ENCODE measurements at regions of chr12 and their contacts with region 1.

Region 1: GRCh38 chr12:15899282-15899870 is 11.8 kb upstream of the DERA start:
- DNase-seq: peak in 4 of 5 donors; percentile 32 to 47 (median 34)
- H3K4me3 ChIP-seq: no peak overlapping the region
- H3K4me3 Mint-ChIP-seq: no peak overlapping the region
- H3K27ac ChIP-seq: no peak overlapping the region
- H3K27ac Mint-ChIP-seq: peak overlapping the region in 5 of 7 donors; percentile 25 to 85 (median 69)
- H3K4me1 ChIP-seq: no peaks in the 10 kb centered on the region
- H3K4me1 Mint-ChIP-seq: peaks cover 7 to 12% (median 8%) of the 10 kb centered on the region in 4 donors
- H3K27me3 ChIP-seq: no peaks in the 10 kb centered on the region
- H3K27me3 Mint-ChIP-seq: no peaks in the 10 kb centered on the region

Region 2: DNA sequence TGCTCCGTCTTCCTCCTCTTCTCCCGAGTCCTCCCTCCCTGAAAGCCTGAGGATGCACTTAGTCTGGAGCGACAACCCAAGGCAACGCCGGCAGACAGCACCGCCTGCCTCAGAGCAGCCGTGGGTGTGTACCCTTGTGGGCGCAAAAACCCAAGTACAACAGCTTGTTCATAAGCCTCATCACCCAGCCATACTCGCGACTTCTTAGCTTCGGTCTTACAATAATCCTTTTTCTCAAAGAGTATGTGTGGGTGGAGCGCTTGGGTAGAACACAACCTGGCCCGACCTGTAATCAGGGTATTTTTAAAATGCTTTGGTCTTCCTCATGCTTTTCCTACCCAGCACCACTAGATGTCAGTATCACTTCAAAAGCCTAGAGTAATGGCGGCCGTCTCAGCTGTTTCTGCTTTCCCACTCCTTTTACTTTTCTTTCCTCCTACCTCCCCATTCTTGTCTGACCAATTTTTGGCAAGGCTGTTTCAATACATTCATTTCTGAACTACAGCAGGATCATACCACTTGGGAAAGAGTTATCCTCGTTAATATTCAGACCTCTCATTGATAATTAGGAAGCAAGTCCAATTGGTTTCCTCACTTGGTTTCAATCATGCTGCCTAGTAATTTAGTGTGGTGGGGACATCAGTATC is 309.1 kb before region 1 on chr12:
- CTCF ChIA-PET with region 1: interaction called, 8 read pairs
- POLR2A ChIA-PET with region 1: no interaction called
- intact Hi-C with region 1: loop called (anchors 1 kb)
- DNase-seq: peak; percentile 53 to 66 (median 63)
- H3K4me3 ChIP-seq: no peak overlapping the region
- H3K4me3 Mint-ChIP-seq: peak overlapping the region; percentile 68 to 88 (median 80)
- H3K27ac ChIP-seq: no peak overlapping the region
- H3K27ac Mint-ChIP-seq: peak overlapping the region in 6 of 7 donors; percentile 28 to 90 (median 40)
- H3K4me1 ChIP-seq: peaks cover 9% of the 10 kb centered on the region
- H3K4me1 Mint-ChIP-seq: peaks cover 3 to 10% (median 8%) of the 10 kb centered on the region in 4 donors
- H3K27me3 ChIP-seq: no peaks in the 10 kb centered on the region
- H3K27me3 Mint-ChIP-seq: peaks cover 3 to 5% of the 10 kb centered on the region in 2 donors

Region 3: GRCh38 chr12:15772405-15773018 is 126.9 kb before region 1 on chr12:
- CTCF ChIA-PET with region 1: interaction called, 4 read pairs
- POLR2A ChIA-PET with region 1: no interaction called
- intact Hi-C with region 1: loop called (anchors 1 kb)
- DNase-seq: peak in 3 of 5 donors; percentile 9 to 26 (median 14)
- H3K4me3 ChIP-seq: no peak overlapping the region
- H3K4me3 Mint-ChIP-seq: no peak overlapping the region
- H3K27ac ChIP-seq: no peak overlapping the region
- H3K27ac Mint-ChIP-seq: no peak overlapping the region
- H3K4me1 ChIP-seq: no peaks in the 10 kb centered on the region
- H3K4me1 Mint-ChIP-seq: peaks cover 0 to 4% (median 1%) of the 10 kb centered on the region in 4 donors
- H3K27me3 ChIP-seq: no peaks in the 10 kb centered on the region
- H3K27me3 Mint-ChIP-seq: peaks cover 3 to 8% of the 10 kb centered on the region in 2 donors

Region 4: GRCh38 chr12:15789220-15790171 is 109.9 kb before region 1 on chr12 and contains the start of gene EPS8:
- CTCF ChIA-PET with region 1: interaction called, 3 read pairs
- POLR2A ChIA-PET with region 1: no interaction called
- intact Hi-C with region 1: loop called (anchors 5 kb)
- DNase-seq: peak; percentile 85 to 90 (median 90)
- H3K4me3 ChIP-seq: peak within 1 kb of the TSS; percentile 58 to 78
- H3K4me3 Mint-ChIP-seq: peak within 1 kb of the TSS; percentile 90 to 98 (median 96)
- H3K27ac ChIP-seq: peak within 1 kb of the TSS; percentile 38
- H3K27ac Mint-ChIP-seq: peak within 1 kb of the TSS; percentile 86 to 93 (median 90)
- H3K4me1 ChIP-seq: peaks cover 19% of the 10 kb centered on the region
- H3K4me1 Mint-ChIP-seq: peaks cover 12 to 19% (median 15%) of the 10 kb centered on the region in 4 donors
- H3K27me3 ChIP-seq: peaks cover 21% of the 10 kb centered on the region
- H3K27me3 Mint-ChIP-seq: peaks cover 12 to 29% of the 10 kb centered on the region in 2 donors
- total RNA-seq, gene EPS8: 2.6 to 3.8 TPM

Region 5: DNA sequence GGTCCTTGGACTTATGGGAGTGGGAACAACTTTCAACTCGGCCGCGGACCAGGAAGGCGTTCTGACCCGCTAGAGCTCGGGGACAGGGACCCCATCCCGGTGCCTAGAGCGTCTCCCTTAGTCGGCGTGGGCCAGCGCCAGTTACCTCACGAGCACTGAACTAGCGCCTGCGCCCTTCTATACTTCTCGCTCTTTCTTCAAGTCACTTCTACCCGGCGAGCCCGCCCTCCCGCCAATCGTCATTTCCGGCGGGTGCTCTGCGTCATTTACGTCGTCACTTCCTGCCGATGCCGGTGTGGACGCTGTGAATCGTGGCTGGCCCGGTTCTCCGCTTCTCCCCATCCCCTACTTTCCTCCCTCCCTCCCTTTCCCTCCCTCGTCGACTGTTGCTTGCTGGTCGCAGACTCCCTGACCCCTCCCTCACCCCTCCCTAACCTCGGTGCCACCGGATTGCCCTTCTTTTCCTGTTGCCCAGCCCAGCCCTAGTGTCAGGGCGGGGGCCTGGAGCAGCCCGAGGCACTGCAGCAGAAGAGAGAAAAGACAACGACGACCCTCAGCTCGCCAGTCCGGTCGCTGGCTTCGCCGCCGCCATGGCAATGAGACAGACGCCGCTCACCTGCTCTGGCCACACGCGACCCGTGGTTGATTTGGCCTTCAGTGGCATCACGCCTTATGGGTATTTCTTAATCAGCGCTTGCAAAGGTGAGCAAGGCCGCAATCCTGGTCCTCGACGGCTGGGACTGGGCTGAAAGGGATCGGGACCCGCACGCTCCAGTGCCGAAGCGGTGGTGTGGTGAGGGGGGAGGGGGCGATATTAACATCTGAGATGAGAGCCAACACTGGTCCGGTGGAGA is 17.0 kb before region 1 on chr12 and contains the start of gene STRAP:
- CTCF ChIA-PET with region 1: interaction called, 16 read pairs
- POLR2A ChIA-PET with region 1: interaction called, 7 read pairs
- intact Hi-C with region 1: loop called (anchors 1 kb)
- DNase-seq: peak; percentile 96 to 97 (median 97)
- H3K4me3 ChIP-seq: peak within 1 kb of the TSS; percentile 90 to 98
- H3K4me3 Mint-ChIP-seq: peak within 1 kb of the TSS; percentile 96 to 99 (median 98)
- H3K27ac ChIP-seq: peak within 1 kb of the TSS; percentile 95
- H3K27ac Mint-ChIP-seq: peak within 1 kb of the TSS; percentile 99 to 100 (median 100)
- H3K4me1 ChIP-seq: peaks cover 51% of the 10 kb centered on the region
- H3K4me1 Mint-ChIP-seq: peaks cover 38 to 66% (median 53%) of the 10 kb centered on the region in 4 donors
- H3K27me3 ChIP-seq: no peaks in the 10 kb centered on the region
- H3K27me3 Mint-ChIP-seq: no peaks in the 10 kb centered on the region
- total RNA-seq, gene STRAP: 46.1 to 49.1 TPM

Region 6: DNA sequence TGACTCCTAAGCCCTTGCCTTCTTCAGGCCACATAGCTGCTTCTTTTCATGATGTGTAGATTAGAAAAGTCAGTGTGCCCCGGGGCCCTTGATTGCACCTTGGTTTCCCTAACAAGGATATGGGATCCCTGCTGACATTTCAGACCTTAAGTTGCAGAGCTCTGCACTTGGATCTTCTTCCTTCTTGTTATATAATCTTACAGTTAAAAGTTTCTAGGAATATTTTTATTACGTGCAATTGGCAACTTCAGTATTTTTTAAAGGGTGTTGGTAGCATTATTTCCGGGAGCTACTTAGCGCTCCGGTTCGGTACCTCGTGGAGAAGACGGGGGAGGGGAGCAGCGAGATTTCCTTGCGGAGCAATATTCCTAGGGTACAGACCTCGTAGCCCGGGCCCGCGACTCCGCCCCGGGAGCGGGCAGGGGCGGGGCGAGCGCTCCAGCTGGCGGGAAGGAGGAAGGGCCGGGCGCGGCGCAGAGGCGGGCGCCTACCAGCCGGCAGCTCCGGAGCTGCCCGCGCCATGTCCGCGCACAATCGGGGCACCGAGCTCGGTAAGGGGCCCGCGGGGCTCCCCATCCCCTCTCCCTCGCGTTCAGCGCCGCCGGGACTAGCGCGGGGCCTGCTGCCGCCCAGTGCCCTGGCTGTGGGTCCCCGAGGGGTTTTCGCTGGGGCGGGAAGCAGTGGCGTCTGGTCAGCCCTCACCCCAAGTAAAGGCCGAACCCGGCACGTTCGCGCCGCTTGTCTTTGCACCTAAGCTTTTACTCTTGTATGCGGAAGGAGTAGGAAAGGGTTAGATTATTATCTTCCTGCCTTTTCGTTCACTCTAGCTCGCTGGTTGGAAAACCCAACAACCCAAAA is 11.7 kb after region 1 on chr12 and contains the start of gene DERA:
- CTCF ChIA-PET with region 1: interaction called, 42 read pairs
- POLR2A ChIA-PET with region 1: interaction called, 11 read pairs
- intact Hi-C with region 1: loop called (anchors 1 kb)
- DNase-seq: peak; percentile 49 to 65 (median 56)
- H3K4me3 ChIP-seq: peak within 1 kb of the TSS; percentile 70 to 92
- H3K4me3 Mint-ChIP-seq: peak within 1 kb of the TSS; percentile 89 to 96 (median 94)
- H3K27ac ChIP-seq: peak within 1 kb of the TSS; percentile 75
- H3K27ac Mint-ChIP-seq: peak within 1 kb of the TSS; percentile 74 to 96 (median 91)
- H3K4me1 ChIP-seq: peaks cover 7% of the 10 kb centered on the region
- H3K4me1 Mint-ChIP-seq: peaks cover 15 to 20% (median 18%) of the 10 kb centered on the region in 4 donors
- H3K27me3 ChIP-seq: no peaks in the 10 kb centered on the region
- H3K27me3 Mint-ChIP-seq: no peaks in the 10 kb centered on the region
- total RNA-seq, gene DERA: 11.2 to 11.4 TPM

Region 7: DNA sequence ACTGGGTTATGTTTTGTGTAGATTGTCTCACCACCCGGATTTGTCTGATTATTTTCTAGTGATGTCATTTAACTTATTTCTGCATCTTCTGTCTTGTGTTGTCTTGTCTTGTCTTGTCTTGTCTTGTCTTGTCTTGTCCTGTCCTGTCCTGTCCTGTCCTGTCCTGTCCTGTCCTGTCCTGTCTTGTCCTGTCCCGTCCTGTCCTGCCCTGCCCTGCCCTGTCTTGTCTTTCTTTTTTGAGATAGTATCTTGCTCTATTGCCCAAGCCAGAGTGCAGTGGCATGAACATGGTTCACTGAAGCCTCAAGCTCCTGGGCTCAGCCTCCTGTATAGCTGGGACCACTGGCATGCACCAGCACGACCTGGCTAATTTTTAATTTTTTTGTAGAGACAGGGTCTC is 37.4 kb after region 1 on chr12:
- CTCF ChIA-PET with region 1: no interaction called
- POLR2A ChIA-PET with region 1: no interaction called
- intact Hi-C with region 1: no loop called
- DNase-seq: no peak
- H3K4me3 ChIP-seq: no peak overlapping the region
- H3K4me3 Mint-ChIP-seq: peak overlapping the region in 1 of 8 donors; percentile 1
- H3K27ac ChIP-seq: no peak overlapping the region
- H3K27ac Mint-ChIP-seq: no peak overlapping the region
- H3K4me1 ChIP-seq: no peaks in the 10 kb centered on the region
- H3K4me1 Mint-ChIP-seq: peaks cover 3 to 12% (median 7%) of the 10 kb centered on the region in 4 donors
- H3K27me3 ChIP-seq: no peaks in the 10 kb centered on the region
- H3K27me3 Mint-ChIP-seq: no peaks in the 10 kb centered on the region

Region 8: DNA sequence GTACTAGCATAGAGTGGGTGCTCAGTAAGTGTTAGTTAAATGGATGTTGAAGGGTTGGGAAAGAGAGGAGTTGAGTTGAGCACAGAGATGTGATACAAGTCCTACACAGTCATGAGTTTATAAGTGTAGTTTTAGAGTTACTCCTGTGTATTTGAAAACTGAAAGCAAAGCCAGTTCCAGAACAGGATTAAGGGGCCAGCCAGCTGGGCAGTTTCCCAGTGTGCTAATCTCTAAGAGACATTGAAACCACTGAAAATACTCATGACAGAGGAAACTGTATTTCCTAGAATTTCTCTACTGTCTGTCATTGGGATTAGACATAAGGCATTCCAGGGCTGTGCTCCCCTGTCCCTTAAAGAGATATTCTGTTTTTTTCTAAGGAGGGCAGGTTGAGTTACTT is 112.7 kb after region 1 on chr12:
- CTCF ChIA-PET with region 1: no interaction called
- POLR2A ChIA-PET with region 1: no interaction called
- intact Hi-C with region 1: no loop called
- DNase-seq: no peak
- H3K4me3 ChIP-seq: no peak overlapping the region
- H3K4me3 Mint-ChIP-seq: no peak overlapping the region
- H3K27ac ChIP-seq: no peak overlapping the region
- H3K27ac Mint-ChIP-seq: no peak overlapping the region
- H3K4me1 ChIP-seq: no peaks in the 10 kb centered on the region
- H3K4me1 Mint-ChIP-seq: peaks cover 0 to 2% (median 0%) of the 10 kb centered on the region in 4 donors
- H3K27me3 ChIP-seq: no peaks in the 10 kb centered on the region
- H3K27me3 Mint-ChIP-seq: no peaks in the 10 kb centered on the region

Region 9: DNA sequence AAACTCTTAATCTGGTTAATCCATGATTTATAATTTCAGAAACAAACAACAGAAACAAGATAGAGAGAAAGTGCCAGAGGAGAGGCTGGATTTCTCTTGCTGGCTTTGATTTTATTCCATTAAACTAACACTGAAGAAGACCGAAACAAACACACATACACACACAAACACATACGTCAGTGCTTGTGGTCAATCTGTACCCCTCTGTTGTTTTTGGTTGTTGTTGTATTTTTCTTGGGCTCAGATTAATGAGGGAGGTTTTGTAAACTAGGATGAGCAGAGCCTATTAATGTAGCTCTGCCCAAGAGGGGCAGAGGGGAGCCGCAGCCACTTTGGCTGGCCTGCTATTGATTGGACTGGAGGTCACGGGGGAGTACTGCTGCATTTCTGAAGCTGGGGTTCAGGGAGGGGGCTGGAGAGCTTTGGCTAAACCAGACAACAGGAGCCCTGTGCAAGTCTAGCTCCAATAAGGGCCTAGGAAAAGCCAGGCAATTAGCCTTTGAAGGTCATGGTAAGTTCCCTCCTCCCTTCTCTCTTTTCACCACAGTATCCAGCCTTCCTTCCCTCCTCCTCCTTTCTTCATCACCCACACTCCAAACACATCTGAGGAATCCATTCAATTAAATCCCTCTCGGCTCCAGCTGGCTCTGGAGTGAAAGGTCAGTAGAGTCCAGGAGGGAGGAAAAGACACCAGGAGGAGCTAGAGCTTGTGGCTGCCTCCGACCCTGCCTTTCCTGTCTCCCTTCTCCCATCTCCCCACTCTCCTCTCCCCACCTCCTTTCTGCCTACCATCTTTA is 1050.7 kb after region 1 on chr12:
- CTCF ChIA-PET with region 1: no interaction called
- POLR2A ChIA-PET with region 1: no interaction called
- intact Hi-C with region 1: no loop called
- DNase-seq: no peak
- H3K4me3 ChIP-seq: no peak overlapping the region
- H3K4me3 Mint-ChIP-seq: no peak overlapping the region
- H3K27ac ChIP-seq: no peak overlapping the region
- H3K27ac Mint-ChIP-seq: no peak overlapping the region
- H3K4me1 ChIP-seq: no peaks in the 10 kb centered on the region
- H3K4me1 Mint-ChIP-seq: no peaks in the 10 kb centered on the region
- H3K27me3 ChIP-seq: no peaks in the 10 kb centered on the region
- H3K27me3 Mint-ChIP-seq: no peaks in the 10 kb centered on the region

Measured in CD4-positive, alpha-beta memory T cell (primary cell).